ENCODE measurements at regions of chr9 and their contacts with region 1.

Region 1: GRCh38 chr9:129610473-129611301 is 10.2 kb downstream of the C9orf50 start:
- H3K4me3 Mint-ChIP-seq: peak overlapping the region; percentile 84
- H3K27ac Mint-ChIP-seq: peak overlapping the region; percentile 83
- H3K4me1 Mint-ChIP-seq: peaks cover 42% of the 10 kb centered on the region
- H3K27me3 Mint-ChIP-seq: peaks cover 26% of the 10 kb centered on the region

Region 2: DNA sequence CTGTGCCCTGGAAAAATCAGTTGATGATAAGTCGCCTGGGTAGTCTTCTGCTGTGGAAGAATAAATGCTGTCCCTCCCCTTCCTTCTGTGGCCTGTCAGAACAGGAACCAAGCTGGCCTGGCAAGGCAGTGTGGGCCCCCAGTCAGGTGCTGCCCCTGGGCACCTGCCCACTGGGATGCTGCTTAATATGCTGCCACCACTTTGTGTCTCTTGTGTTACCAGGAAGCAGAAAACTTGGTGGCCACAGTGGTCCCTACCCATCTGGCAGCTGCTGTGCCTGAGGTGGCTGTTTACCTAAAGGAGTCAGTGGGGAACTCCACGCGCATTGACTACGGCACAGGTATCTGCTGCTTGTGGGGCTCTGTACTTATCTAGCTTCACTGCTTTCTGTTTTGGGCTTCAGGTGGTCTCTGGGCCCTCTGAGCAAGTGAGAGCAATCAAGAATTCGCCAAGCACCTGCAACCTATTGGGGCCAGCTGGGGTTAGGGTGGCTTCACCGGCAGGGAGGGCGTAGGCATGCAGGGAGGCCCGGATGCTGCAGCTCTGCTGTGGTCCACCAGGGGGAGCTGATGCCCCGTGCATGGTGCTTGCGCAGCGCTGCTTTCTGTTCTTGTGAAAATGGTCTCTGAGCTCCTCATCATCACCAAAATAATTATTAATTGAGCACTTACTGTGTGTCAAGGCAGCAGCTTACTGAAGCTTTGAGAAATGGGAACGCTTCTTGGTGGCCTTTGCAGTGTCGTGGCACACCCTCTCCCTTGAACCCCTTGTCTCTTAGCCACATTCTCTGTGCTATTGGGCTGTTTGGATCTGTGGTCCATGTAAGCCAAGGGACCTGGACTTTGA is 479.2 kb before region 1 on chr9:
- intact Hi-C with region 1: loop called (anchors 2 kb)
- H3K4me3 Mint-ChIP-seq: no peak overlapping the region
- H3K27ac Mint-ChIP-seq: no peak overlapping the region
- H3K4me1 Mint-ChIP-seq: peaks cover 8% of the 10 kb centered on the region
- H3K27me3 Mint-ChIP-seq: no peaks in the 10 kb centered on the region

Region 3: GRCh38 chr9:129139993-129140396 is 470.7 kb before region 1 on chr9:
- intact Hi-C with region 1: loop called (anchors 1 kb)
- H3K4me3 Mint-ChIP-seq: peak overlapping the region; percentile 77
- H3K27ac Mint-ChIP-seq: peak overlapping the region; percentile 96
- H3K4me1 Mint-ChIP-seq: peaks cover 59% of the 10 kb centered on the region
- H3K27me3 Mint-ChIP-seq: no peaks in the 10 kb centered on the region

Region 4: DNA sequence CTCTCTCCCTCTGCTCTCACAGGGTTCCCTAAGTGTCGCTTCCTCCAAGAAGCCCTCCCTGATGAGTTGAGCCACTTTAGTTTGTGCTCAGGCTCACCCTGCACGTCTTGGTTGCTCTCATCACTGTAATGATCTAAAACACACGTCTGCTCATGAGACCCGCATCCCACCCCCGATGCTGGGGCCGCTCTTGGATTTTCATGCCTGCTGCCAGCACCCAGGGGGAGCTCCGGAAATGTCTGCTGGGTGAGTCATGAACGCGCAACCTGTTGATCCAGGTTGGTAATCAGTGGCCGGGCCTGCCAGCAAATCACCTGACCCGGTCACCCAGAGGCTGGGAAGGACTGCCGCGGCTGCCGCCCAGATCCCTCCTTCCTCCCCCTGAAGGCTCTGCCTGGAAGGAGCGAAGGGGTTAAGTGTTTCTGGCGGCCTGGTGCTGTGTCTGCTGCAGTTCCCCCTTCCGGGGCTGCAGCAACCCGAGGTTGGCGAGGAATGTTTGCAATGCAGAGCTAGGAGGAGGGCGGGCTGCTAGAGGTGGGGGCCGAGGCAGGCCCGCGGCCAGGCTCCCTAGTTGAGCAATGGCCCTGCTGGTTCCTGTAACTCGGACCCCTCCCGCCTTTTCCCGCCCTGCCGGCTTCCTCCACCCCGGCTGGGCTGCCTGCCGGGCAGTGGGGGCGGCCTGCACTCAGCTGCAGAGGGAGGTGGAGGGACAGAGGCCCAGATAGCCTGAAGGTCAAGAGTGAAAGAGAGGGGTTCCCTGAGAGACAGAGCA is 276.5 kb before region 1 on chr9:
- intact Hi-C with region 1: loop called (anchors 10 kb)
- H3K4me3 Mint-ChIP-seq: peak overlapping the region; percentile 73
- H3K27ac Mint-ChIP-seq: peak overlapping the region; percentile 83
- H3K4me1 Mint-ChIP-seq: peaks cover 54% of the 10 kb centered on the region
- H3K27me3 Mint-ChIP-seq: no peaks in the 10 kb centered on the region

Region 5: GRCh38 chr9:129524582-129525270 is 86.0 kb before region 1 on chr9:
- intact Hi-C with region 1: no loop called
- H3K4me3 Mint-ChIP-seq: no peak overlapping the region
- H3K27ac Mint-ChIP-seq: no peak overlapping the region
- H3K4me1 Mint-ChIP-seq: peaks cover 24% of the 10 kb centered on the region
- H3K27me3 Mint-ChIP-seq: peaks cover 25% of the 10 kb centered on the region